ENCODE measurements at regions of chr19 and their contacts with region 1.

Region 1: DNA sequence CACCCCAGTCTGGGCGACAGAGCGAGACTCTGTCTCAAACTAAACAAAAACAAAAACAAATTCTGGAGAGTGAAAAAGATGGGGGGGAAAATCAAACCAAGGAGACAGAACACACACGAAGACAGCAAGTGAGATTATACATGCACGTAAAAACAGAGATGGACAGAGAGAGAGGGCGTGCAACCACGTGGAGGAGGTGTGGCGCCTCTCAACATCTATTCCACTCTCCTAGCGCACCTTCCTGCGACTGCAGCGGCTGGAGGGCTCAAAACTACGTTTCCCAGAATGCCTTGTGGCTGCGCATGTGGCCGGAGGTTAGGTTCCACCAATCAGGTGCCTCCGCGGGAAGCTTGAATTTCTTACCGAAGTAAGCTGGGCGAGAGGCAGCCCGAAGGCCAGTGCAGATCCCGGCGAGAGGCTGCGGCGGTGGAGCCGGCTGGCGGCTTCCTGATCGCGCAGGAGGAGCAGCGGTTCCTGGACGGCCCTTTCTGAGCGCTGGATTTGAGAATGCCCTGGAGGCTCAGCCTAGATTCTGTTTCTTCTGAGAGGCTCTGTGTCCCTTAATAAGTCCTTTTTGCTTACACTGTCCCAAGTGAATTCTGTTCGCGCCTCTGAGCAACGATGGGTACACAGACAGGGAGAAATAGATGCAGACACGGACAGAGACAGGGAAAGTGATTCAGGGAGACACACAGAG is 13.1 kb upstream of the NANOS2 start:
- DNase-seq: peak; percentile 87 to 93 (median 91)
- ATAC-seq: peak; percentile 82 to 94 (median 94)
- H3K4me3 ChIP-seq: peak overlapping the region in 1 of 12 donors; percentile 19
- H3K27ac ChIP-seq: no peak overlapping the region
- H3K4me1 ChIP-seq: peaks cover 0 to 9% (median 3%) of the 10 kb centered on the region in 12 donors
- H3K27me3 ChIP-seq: peaks cover 0 to 5% (median 0%) of the 10 kb centered on the region in 9 donors
- CTCF ChIP-seq: peak in 2 of 12 donors; percentile 8 to 26
- POLR2A ChIP-seq: no peak

Region 2: GRCh38 chr19:45809643-45810159 is 118.0 kb before region 1 on chr19:
- intact Hi-C with region 1: no loop called
- DNase-seq: no peak
- ATAC-seq: no peak
- H3K4me3 ChIP-seq: no peak overlapping the region
- H3K27ac ChIP-seq: no peak overlapping the region
- H3K4me1 ChIP-seq: peaks cover 0 to 6% (median under 1%) of the 10 kb centered on the region in 12 donors
- H3K27me3 ChIP-seq: peaks cover 0 to 5% (median 0%) of the 10 kb centered on the region in 9 donors
- CTCF ChIP-seq: no peak
- POLR2A ChIP-seq: no peak

Region 3: DNA sequence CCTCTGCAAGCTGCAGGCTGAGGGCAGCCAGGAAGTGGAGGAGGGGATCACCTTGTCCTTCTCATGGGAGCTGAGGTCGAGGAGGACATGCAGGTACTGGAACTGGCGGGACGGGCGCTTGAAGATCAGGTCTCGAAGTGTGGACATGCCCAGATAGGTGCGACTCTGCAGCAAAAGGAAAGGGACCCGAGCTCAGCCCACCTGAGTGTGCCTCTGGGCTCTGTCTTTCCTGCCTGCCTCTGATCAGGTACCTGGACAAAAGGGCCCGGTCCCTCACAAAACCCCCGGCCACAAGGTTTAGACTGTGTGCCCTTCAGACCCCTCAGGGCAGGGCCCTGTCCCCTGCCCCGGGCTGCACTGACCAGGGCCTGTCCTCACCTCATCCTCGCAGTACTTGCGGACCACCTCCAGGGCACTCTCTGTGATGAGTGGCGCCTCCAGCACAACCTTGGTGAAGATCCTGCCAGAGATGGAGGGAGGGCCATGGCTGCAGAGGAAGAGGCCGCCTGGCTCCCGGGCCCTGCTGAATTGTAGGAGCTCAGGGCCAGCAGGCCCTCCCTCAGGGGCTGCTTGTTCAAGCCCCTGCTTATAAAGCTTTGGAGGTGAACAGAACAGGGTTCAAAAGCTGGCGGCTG is 100.1 kb before region 1 on chr19:
- intact Hi-C with region 1: no loop called
- DNase-seq: peak in 1 of 5 donors; percentile 36
- ATAC-seq: no peak
- H3K4me3 ChIP-seq: no peak overlapping the region
- H3K27ac ChIP-seq: no peak overlapping the region
- H3K4me1 ChIP-seq: peaks cover 0 to 8% (median 0%) of the 10 kb centered on the region in 12 donors
- H3K27me3 ChIP-seq: no peaks in the 10 kb centered on the region
- CTCF ChIP-seq: no peak
- POLR2A ChIP-seq: no peak

Region 4: GRCh38 chr19:45847663-45848062 is 80.0 kb before region 1 on chr19:
- intact Hi-C with region 1: no loop called
- DNase-seq: no peak
- ATAC-seq: peak in 2 of 4 donors; percentile 34 to 48
- H3K4me3 ChIP-seq: no peak overlapping the region
- H3K27ac ChIP-seq: no peak overlapping the region
- H3K4me1 ChIP-seq: no peaks in the 10 kb centered on the region
- H3K27me3 ChIP-seq: no peaks in the 10 kb centered on the region
- CTCF ChIP-seq: no peak
- POLR2A ChIP-seq: no peak

Region 5: GRCh38 chr19:45960595-45961235 is 33.0 kb after region 1 on chr19:
- intact Hi-C with region 1: no loop called
- DNase-seq: no peak
- ATAC-seq: no peak
- H3K4me3 ChIP-seq: no peak overlapping the region
- H3K27ac ChIP-seq: peak overlapping the region in 9 of 12 donors; percentile 6 to 83 (median 48)
- H3K4me1 ChIP-seq: peaks cover 0 to 43% (median 22%) of the 10 kb centered on the region in 12 donors
- H3K27me3 ChIP-seq: peaks cover 0 to 24% (median 5%) of the 10 kb centered on the region in 9 donors
- CTCF ChIP-seq: no peak
- POLR2A ChIP-seq: no peak

Region 6: GRCh38 chr19:45994989-45995714 is 67.4 kb after region 1 on chr19 and contains the start of gene CCDC61:
- intact Hi-C with region 1: loop called in 1 of 10 experiments (anchors 5 kb)
- DNase-seq: peak; percentile 94 to 96 (median 95)
- ATAC-seq: peak; percentile 99
- H3K4me3 ChIP-seq: peak within 1 kb of the TSS; percentile 61 to 91 (median 76)
- H3K27ac ChIP-seq: peak within 1 kb of the TSS in 11 of 12 donors; percentile 64 to 89 (median 76)
- H3K4me1 ChIP-seq: peaks cover 3 to 20% (median 13%) of the 10 kb centered on the region in 12 donors
- H3K27me3 ChIP-seq: peaks cover 0 to 12% (median 0%) of the 10 kb centered on the region in 9 donors
- CTCF ChIP-seq: no peak
- POLR2A ChIP-seq: peak in 1 of 2 donors; percentile 94
- total RNA-seq, gene CCDC61: 4.1 to 13.7 (median 7.1) TPM

Region 7: DNA sequence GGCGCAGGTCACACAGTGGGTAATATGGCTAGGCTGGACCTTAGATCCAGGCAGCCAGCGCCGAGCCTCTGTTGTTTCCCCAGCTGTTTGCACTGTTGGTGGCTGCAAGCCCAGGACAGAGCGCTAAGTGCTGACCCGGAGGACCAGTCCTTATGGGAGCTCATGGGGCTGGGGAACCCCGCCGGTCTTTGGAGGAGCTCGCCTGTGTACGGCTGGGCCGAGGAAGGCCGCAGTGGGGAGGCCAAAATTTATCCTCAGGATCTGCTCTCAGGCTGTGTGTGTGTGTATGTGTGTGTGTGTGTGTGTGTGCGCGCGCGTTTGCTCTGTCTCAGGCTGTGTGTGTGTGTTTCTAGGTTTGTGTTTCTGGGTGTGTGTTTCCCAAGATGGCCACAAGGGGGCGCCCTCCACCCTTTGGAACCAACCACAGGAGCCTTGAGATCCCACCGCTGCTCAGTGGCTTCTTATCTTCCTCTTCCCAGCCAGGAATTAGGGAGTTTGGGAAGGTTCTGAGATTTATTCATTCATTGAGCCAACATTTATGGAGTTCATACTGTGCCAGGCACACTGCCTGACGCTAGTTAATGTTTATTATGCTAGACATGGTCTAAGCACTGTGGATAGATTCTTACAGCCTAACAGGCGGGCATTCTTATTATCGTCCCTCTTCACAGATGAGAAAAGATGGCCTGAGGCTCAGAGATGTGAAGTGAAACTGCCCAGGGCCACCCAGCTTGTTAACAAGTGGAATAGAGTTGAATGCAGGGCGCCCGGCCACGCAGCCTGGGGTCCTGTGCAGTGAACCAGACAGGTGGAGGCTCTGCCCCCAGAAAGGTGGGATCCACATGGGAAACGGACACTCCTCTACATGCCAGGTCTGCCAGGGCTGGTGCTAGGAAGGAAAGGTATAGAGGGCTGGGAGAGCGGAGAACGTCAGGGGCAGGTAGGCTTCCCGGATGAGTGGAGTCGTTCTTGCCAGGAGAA is 82.1 kb after region 1 on chr19:
- intact Hi-C with region 1: loop called in 4 of 10 experiments (anchors 5 to 10 kb)
- DNase-seq: peak; percentile 52 to 80 (median 62)
- ATAC-seq: peak; percentile 31 to 87 (median 80)
- H3K4me3 ChIP-seq: no peak overlapping the region
- H3K27ac ChIP-seq: no peak overlapping the region
- H3K4me1 ChIP-seq: peaks cover 0 to 6% (median 1%) of the 10 kb centered on the region in 12 donors
- H3K27me3 ChIP-seq: peaks cover 0 to 32% (median 7%) of the 10 kb centered on the region in 9 donors
- CTCF ChIP-seq: peak; percentile 73 to 92 (median 85)
- POLR2A ChIP-seq: no peak

Region 8: GRCh38 chr19:46016426-46017094 is 88.8 kb after region 1 on chr19:
- intact Hi-C with region 1: loop called in 4 of 10 experiments (anchors 2 to 10 kb)
- DNase-seq: peak; percentile 79 to 89 (median 83)
- ATAC-seq: peak; percentile 81 to 92 (median 86)
- H3K4me3 ChIP-seq: peak overlapping the region; percentile 44 to 91 (median 72)
- H3K27ac ChIP-seq: peak overlapping the region in 2 of 12 donors; percentile 33 to 51
- H3K4me1 ChIP-seq: peaks cover 0 to 28% (median 13%) of the 10 kb centered on the region in 12 donors
- H3K27me3 ChIP-seq: peaks cover 0 to 38% (median 14%) of the 10 kb centered on the region in 9 donors
- CTCF ChIP-seq: peak; percentile 82 to 98 (median 90)
- POLR2A ChIP-seq: no peak